HEK293 (cell line): ENCODE measurements at regions of chr21 and their contacts with region 1.

Region 1: GRCh38 chr21:31098576-31099005 is 60.3 kb upstream of the KRTAP19-8 start:
- H3K4me3 ChIP-seq: no peak overlapping the region
- H3K27ac ChIP-seq: no peak overlapping the region
- H3K4me1 ChIP-seq: no peaks in the 10 kb centered on the region
- CTCF ChIP-seq: peak; percentile 71; the same call in 1 of the 2 replicates

Region 2: DNA sequence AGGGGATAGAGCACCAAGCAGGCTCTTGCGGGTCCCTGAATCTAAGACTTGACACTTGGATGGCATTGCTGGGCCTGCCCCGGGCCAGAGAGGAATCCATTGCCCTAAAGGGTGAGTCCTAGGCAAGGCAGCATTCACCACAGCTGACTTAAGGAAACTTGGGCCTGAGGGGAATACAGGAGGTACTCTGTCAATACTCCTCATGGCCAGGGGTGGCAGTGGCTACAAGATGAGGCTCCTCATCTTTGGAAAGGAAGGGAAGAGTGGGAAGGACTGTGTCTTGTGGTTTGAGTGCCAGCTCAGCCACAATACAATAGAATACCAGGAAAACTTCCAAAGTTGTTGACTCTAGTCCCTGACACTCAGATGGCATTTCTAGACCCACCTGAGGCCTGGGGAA is 492.6 kb before region 1 on chr21:
- CTCF ChIA-PET with region 1: no interaction called
- POLR2A ChIA-PET with region 1: no interaction called
- H3K4me3 ChIP-seq: no peak overlapping the region
- H3K27ac ChIP-seq: no peak overlapping the region
- H3K4me1 ChIP-seq: no peaks in the 10 kb centered on the region
- CTCF ChIP-seq: no peak

Region 3: GRCh38 chr21:30719401-30719800 is 379.2 kb before region 1 on chr21:
- CTCF ChIA-PET with region 1: no interaction called
- POLR2A ChIA-PET with region 1: no interaction called
- H3K4me3 ChIP-seq: no peak overlapping the region
- H3K27ac ChIP-seq: no peak overlapping the region
- H3K4me1 ChIP-seq: no peaks in the 10 kb centered on the region
- CTCF ChIP-seq: no peak

Region 4: DNA sequence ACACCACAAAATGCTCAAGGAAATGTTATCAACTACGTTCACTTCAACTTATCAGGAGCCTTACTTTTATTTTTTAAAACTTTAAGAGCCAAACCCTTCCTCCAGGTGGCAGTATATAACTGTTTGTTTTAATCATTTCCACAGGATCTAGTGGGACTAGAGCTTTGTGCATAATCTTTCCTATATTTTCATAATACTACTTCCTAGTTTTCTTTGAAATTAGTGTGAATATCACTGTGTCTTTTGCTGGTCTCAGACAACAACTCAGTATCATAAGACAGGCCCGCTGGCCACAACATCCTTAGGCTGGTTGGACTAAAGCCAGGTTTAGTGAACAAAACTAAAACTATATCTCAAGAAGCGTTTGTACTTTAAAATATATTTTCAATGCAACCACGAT is 100.0 kb after region 1 on chr21:
- CTCF ChIA-PET with region 1: interaction called, 10 read pairs
- POLR2A ChIA-PET with region 1: no interaction called
- H3K4me3 ChIP-seq: no peak overlapping the region
- H3K27ac ChIP-seq: no peak overlapping the region
- H3K4me1 ChIP-seq: peaks cover 11% of the 10 kb centered on the region; the same call in 1 of the 2 replicates
- CTCF ChIP-seq: no peak